ENCODE measurements at regions of chr12 and their contacts with region 1.

Region 1: GRCh38 chr12:71685914-71686665 is at the start of gene TMEM19:
- DNase-seq: peak; percentile 89 to 92 (median 92)
- H3K4me3 ChIP-seq: peak within 1 kb of the TSS; percentile 68 to 98 (median 86)
- H3K27ac ChIP-seq: peak within 1 kb of the TSS; percentile 75 to 83
- H3K4me1 ChIP-seq: peaks cover 9 to 36% (median 15%) of the 10 kb centered on the region in 4 experiments
- H3K27me3 ChIP-seq: no peaks in the 10 kb centered on the region

Region 2: GRCh38 chr12:71663561-71664294 is 22.4 kb before region 1 on chr12 and contains the start of gene ZFC3H1:
- CTCF ChIA-PET with region 1: interaction called, 37 read pairs
- POLR2A ChIA-PET with region 1: interaction called, 21 read pairs
- DNase-seq: peak; percentile 99 to 100 (median 99)
- H3K4me3 ChIP-seq: peak within 1 kb of the TSS; percentile 93 to 100 (median 100)
- H3K27ac ChIP-seq: peak within 1 kb of the TSS; percentile 93 to 96
- H3K4me1 ChIP-seq: peaks cover 7 to 36% (median 15%) of the 10 kb centered on the region in 4 experiments
- H3K27me3 ChIP-seq: no peaks in the 10 kb centered on the region